ENCODE measurements at regions of chr4 and their contacts with region 1.

Region 1: DNA sequence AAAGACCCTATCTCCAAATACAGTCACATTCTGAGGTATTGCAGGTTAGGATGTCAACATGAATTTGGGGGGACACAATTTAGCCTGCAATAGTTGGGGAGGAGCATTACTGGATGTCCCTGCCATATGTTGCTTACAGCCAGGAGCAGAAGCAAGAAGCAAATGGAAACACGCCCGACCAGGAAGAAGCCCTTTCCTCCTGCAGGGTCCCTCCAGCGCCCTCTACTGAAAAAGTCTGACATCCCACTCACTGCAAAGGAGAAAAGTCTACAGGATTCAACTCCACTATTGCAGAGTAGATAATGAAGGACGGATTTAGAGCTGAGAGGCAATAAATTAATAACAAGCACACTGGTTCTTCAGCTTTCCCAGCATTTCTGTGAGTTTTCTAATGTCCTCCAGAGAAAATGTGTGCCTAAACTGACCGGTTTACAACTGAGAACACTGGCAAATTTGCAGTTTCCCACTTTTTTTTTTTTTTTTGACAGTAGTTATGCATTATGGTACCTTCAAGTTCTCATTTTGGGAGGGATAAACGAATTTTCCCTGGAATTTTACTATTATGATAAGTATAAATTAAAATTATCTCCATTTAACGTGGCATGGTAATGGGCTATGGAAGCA is 31.7 kb downstream of the COQ2 start:
- DNase-seq: peak; percentile 86
- H3K4me3 ChIP-seq: no peak overlapping the region
- H3K27ac ChIP-seq: no peak overlapping the region
- H3K4me1 ChIP-seq: peaks cover 39% of the 10 kb centered on the region
- CTCF ChIP-seq: peak; percentile 95

Region 2: DNA sequence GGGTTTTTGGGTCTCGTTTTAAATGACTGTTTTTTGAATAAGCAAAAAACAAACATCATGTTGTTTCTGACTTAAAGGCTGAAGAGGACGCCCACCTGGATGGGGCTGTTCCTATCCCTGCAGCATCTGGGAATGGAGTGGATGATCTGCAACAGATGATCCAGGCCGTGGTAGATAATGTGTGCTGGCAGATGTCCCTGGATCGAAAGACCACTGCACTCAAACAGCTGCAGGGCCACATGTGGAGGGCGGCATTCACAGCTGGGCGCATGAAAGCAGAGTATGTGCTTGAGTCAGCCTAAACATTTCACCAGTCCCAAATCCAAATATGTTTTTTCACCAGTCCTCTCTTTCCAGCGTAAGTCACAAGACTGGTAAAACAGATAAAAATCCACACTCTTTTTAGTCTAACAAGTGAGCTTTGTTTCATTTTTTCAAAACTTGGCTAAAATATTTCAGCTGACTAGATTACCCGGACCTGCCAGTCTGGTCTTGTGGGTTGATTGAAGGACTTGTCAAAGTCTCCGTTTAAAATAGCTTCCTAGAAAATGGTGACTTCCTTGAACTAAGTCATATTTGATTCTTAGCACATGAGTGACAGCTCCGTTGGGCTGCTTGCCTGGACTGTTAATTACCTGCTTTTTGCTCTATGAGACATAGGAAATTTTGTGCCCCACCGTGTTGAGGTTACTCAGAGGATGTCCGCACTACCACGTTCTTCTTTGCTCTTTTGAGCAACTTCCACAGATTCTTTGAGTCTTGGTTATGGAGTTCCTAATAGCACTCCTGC is 801.7 kb before region 1 on chr4:
- CTCF ChIA-PET with region 1: no interaction called
- POLR2A ChIA-PET with region 1: no interaction called
- intact Hi-C with region 1: no loop called
- DNase-seq: no peak
- H3K4me3 ChIP-seq: no peak overlapping the region
- H3K27ac ChIP-seq: no peak overlapping the region
- H3K4me1 ChIP-seq: no peaks in the 10 kb centered on the region
- CTCF ChIP-seq: no peak

Region 3: GRCh38 chr4:83074086-83074704 is 178.7 kb before region 1 on chr4:
- CTCF ChIA-PET with region 1: no interaction called
- POLR2A ChIA-PET with region 1: interaction called, 6 read pairs
- intact Hi-C with region 1: loop called (anchors 1 kb)
- DNase-seq: peak; percentile 86
- H3K4me3 ChIP-seq: no peak overlapping the region
- H3K27ac ChIP-seq: no peak overlapping the region
- H3K4me1 ChIP-seq: no peaks in the 10 kb centered on the region
- CTCF ChIP-seq: peak; percentile 94

Region 4: GRCh38 chr4:83110223-83110945 is 142.5 kb before region 1 on chr4:
- CTCF ChIA-PET with region 1: no interaction called
- POLR2A ChIA-PET with region 1: interaction called, 4 read pairs
- intact Hi-C with region 1: loop called (anchors 2 kb)
- DNase-seq: peak; percentile 93
- H3K4me3 ChIP-seq: peak overlapping the region; percentile 58
- H3K27ac ChIP-seq: peak overlapping the region; percentile 25
- H3K4me1 ChIP-seq: peaks cover 37% of the 10 kb centered on the region
- CTCF ChIP-seq: peak; percentile 91

Region 5: DNA sequence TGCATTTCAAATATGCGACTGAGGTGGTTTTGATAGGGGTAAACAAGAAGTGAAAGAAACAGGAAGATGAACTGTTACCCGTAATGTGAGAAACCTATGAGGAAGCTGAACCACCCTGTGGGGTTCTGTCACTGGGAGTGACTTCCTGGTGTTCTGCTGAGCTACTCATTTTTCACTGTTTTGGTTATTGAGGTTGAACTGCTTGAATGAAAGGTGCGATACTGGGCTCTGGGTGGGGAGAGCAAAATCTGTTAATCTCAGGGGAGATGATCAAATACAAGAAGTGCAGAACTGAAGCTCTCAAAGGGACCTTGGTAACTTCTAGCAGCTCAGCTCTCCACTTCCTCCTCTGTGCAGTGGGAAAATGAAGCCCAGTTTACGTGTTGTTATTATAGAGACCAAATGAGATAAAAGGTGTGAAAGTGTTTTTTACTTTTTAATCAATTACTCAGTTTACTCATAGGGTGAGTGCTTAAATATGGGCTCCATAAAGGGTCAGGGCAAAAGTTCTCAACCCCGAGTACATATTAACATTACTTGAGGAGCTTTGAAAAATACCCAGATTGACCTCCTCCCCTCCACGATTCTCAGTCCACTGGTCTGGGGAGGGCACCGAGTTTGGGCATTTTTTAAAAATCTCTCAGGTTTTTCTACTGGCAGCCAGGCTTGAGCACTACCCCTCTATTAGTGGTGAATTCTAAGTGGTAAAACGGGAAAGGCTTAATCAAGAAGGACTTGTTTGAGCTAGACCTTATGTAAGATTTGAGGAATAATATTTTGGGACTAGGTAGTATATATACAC is 35.0 kb before region 1 on chr4:
- CTCF ChIA-PET with region 1: no interaction called
- POLR2A ChIA-PET with region 1: interaction called, 5 read pairs
- intact Hi-C with region 1: loop called (anchors 1 kb)
- DNase-seq: peak; percentile 95
- H3K4me3 ChIP-seq: peak overlapping the region; percentile 43
- H3K27ac ChIP-seq: peak overlapping the region; percentile 86
- H3K4me1 ChIP-seq: peaks cover 81% of the 10 kb centered on the region
- CTCF ChIP-seq: no peak

Measured in OCI-LY7 (cell line).